AG04450 (cell line): ENCODE measurements at regions of chr4 and their contacts with region 1.

Region 1: DNA sequence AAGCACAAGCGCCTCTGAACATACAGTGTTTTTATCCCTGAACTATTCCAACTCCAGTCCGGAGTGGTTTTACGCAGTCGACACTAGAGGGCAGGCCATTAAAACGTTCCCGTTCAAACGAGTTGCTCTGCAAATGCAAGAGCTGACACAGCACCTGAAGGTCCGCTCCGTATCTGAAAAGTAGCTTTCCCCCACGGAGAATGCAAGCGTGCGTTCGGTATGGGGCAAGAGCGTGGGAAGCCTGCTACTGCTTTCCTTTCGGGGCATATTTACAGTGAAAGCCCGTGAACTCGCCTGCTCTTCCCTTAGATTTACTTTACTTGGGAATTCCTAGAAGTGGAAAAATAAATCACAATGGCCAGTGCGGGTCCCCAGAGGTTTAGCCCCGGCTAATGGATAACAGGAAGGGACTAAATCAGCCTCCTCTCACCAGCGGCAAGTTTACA is 190.8 kb downstream of the TSPAN5 start:
- DNase-seq: peak; percentile 88
- H3K4me3 ChIP-seq: peak overlapping the region; percentile 45
- H3K27ac ChIP-seq: peak overlapping the region; percentile 75
- H3K27me3 ChIP-seq: no peaks in the 10 kb centered on the region
- CTCF ChIP-seq: peak; percentile 88

Region 2: DNA sequence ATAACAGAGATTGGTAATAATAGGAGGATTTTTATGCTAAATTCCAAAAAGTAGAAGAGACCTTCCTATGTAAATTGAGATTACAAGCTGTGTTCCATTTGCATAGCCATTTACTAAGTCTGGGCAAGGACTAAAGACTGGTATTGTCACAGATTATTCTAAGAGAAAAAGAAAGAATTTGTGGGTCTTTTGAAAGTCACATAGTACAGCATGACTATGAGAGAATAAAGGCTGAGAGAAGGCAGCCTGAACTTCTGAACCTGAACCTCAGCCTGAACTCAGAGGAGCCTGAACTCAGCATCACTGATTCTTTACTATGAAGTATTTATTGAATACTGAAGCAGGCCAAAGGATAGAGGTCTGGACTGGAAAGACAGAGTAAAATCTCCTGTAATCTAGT is 621.9 kb before region 1 on chr4:
- CTCF ChIA-PET with region 1: no interaction called
- POLR2A ChIA-PET with region 1: no interaction called
- DNase-seq: no peak
- H3K4me3 ChIP-seq: no peak overlapping the region
- H3K27ac ChIP-seq: no peak overlapping the region
- H3K27me3 ChIP-seq: no peaks in the 10 kb centered on the region
- CTCF ChIP-seq: no peak

Region 3: GRCh38 chr4:98181809-98182208 is 285.8 kb before region 1 on chr4:
- CTCF ChIA-PET with region 1: no interaction called
- POLR2A ChIA-PET with region 1: no interaction called
- DNase-seq: no peak
- H3K4me3 ChIP-seq: no peak overlapping the region
- H3K27ac ChIP-seq: no peak overlapping the region
- H3K27me3 ChIP-seq: peaks cover 3% of the 10 kb centered on the region
- CTCF ChIP-seq: no peak

Region 4: DNA sequence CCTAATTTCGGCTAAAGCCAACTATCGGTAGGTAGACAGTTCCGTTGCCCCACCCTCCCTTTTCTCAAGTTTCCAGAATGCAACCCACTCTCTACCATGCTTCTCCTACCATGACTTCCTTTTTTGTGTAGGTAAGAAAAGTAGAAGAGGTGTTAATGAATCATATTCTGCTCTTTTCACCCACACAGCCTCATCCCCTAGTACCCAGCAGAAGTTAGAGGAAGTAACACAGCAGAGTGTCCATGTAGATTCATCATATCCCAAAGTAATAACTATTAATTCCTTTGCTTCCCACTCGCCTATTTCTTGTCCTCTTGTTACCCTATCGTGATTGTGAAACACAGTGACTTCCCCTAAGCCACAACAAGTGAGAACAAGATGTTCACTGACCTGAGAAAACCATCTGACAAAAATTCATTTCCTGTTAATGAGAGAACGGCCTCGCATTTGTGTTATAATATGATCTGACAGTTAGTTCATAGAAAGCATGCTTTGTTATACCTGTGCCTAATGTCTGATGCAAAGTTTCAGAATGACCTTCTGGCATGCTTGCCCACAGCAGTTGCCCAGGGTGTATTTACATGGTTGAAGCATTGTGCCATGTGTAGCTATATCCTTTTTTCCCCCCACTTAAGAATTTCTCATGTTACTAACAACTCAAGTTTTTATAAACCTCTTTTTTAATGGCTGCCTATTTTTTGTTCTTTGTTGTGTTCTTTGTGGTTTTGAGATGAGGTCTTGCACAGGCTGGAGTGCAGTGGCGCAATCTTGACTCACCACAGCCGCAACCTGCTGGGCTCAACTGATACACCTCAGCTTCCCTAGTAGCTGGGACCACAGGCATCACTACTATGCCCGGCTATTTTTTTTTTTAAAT is 20.9 kb before region 1 on chr4:
- CTCF ChIA-PET with region 1: interaction called, 14 read pairs
- POLR2A ChIA-PET with region 1: no interaction called
- DNase-seq: no peak
- H3K4me3 ChIP-seq: no peak overlapping the region
- H3K27ac ChIP-seq: no peak overlapping the region
- H3K27me3 ChIP-seq: no peaks in the 10 kb centered on the region
- CTCF ChIP-seq: no peak

Region 5: DNA sequence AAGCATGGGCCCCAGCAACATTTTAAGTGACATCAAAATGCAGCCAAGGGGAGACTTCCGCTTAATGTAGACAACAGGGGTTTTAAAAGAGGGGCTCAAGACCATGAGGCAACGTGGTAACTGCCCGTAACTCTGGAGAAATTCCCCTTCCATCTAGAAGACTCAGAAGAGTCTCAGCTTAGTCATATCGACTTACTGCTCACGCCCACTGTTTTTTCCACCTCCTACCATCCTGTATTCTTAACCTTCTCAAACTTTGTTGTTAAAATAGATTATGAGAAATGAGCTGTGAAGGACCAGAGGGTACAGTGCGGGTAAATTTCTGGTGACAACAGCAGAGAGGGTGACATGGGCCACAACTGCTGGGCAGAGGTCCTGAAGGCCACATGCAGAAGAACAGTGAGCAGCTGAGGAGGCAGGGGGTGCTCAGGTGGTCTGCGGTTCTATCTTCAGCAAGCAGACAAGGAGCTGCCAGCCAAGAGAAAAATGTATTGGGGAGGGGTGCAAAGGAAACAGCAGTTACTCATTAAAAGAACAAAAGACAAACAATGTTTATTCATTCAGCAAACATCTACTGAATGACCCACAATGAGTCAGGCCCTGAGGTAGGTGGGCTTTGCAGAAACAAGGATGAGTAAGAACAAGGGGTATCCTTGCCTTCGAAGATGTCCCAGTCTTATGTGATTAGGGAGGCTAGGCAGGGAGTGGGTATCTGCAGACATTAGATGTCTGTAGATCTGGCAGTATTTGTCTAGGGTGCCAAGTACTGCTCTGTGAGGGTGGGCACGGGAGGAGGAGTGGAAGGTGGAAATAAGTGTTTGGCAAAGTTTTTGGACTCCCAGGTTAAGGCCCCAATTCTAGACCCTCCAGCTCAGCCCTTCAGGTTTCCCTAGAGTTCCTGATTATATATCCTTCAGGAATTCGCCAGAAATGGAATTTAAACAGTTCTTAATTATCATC is 15.5 kb after region 1 on chr4:
- CTCF ChIA-PET with region 1: interaction called, 19 read pairs
- POLR2A ChIA-PET with region 1: no interaction called
- DNase-seq: no peak
- H3K4me3 ChIP-seq: no peak overlapping the region
- H3K27ac ChIP-seq: peak overlapping the region; percentile 47
- H3K27me3 ChIP-seq: no peaks in the 10 kb centered on the region
- CTCF ChIP-seq: no peak

Region 6: DNA sequence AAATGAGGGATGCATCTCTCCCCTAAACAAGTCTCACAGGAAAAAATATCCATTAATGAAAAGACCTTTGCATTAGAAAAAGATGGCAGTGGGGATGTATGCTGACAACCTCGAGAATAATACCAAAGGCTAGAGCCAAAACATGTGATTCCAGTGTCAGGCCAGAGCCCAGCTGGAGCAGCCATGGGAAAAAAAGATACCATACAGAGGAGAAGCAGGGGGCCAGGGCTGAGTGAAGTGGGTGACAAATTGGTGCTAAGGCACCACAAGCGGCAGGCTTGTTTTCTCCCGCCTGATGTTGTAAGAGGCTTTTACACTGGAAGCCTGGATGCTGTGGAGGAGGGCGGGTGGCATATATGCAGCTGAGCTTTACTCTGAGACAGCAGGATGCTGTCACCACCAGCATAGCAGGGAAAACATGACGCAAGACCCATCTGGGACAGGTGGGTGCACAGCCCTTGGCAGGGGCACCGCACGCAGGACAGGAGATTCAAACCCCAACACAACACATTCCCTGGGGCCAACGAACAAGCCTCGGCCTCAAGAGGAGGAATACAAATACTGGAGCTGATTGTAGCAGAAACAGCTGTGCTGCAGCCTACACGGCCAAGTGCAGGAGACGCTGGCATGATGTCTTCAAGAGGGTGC is 98.8 kb after region 1 on chr4:
- CTCF ChIA-PET with region 1: interaction called, 10 read pairs
- POLR2A ChIA-PET with region 1: interaction called, 3 read pairs
- DNase-seq: no peak
- H3K4me3 ChIP-seq: no peak overlapping the region
- H3K27ac ChIP-seq: peak overlapping the region; percentile 58
- H3K27me3 ChIP-seq: no peaks in the 10 kb centered on the region
- CTCF ChIP-seq: no peak

Region 7: DNA sequence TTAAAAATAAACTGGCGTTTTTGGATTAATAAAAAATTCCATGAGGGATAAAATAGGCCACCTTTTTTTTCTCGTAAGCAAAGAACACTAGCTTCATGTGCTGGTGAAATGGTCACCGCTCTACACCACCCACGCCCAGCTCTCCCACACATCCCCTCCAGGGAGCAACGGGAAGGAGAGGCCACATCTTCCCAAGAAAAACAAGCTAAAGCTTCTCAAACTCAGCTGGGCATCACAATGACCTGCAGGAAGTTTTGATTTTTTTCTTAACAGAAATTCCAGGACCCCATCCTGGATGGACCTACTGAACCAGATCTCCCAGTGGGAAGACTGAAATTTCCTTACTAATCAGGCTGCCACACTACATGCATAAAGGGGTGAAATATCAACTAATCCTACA is 181.0 kb after region 1 on chr4:
- CTCF ChIA-PET with region 1: interaction called, 19 read pairs
- POLR2A ChIA-PET with region 1: no interaction called
- DNase-seq: no peak
- H3K4me3 ChIP-seq: no peak overlapping the region
- H3K27ac ChIP-seq: no peak overlapping the region
- H3K27me3 ChIP-seq: no peaks in the 10 kb centered on the region
- CTCF ChIP-seq: no peak

Region 8: DNA sequence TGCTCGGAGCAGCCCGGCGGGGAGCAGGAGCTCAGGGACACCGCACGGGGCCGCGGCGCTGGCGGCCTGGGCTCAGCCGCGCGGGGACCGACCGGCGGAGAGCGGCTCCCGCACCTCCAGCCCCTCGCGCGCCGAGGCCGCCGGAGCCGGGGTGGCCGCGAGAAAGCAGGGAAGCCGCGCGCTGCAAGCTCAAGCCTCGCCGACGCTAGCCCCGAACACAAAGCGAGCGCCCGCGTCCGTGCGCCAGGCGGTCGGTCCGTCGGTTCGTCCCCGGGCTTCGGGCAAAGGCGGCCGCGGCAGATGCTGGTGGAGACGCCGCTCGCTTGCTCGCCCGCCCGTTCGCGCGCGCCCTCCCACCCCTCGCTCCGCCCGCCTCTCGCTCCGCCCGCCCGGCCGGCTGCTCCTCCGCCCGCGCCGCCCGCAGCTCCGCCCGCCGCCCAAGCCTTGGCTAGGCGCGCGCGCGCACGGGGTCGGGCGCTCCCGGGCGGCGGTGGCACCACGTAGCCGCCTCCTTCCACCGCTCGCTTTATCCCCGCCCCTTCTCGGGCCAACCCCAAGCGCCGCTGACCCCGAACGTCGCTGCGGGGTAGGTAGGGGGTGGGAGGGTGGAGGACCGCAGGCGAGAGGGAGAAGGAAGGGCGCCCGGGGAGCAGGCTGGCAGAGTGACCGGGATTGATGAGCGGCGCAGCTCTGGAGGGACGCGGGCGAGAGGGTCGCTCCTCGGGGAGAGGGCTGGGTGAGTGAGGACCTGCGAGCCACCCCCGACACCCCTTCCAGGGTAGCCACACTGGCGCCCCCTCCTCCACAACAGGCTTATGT is 190.8 kb after region 1 on chr4 and contains the start of gene TSPAN5:
- CTCF ChIA-PET with region 1: interaction called, 30 read pairs
- POLR2A ChIA-PET with region 1: interaction called, 5 read pairs
- DNase-seq: no peak
- H3K4me3 ChIP-seq: peak within 1 kb of the TSS; percentile 97
- H3K27ac ChIP-seq: peak within 1 kb of the TSS; percentile 80
- H3K27me3 ChIP-seq: no peaks in the 10 kb centered on the region
- CTCF ChIP-seq: no peak
- polyA plus RNA-seq, gene TSPAN5: 146 and 190 TPM in 2 replicates